KBM-7 (cell line): ENCODE measurements at regions of chr19 and their contacts with region 1.

Region 1: DNA sequence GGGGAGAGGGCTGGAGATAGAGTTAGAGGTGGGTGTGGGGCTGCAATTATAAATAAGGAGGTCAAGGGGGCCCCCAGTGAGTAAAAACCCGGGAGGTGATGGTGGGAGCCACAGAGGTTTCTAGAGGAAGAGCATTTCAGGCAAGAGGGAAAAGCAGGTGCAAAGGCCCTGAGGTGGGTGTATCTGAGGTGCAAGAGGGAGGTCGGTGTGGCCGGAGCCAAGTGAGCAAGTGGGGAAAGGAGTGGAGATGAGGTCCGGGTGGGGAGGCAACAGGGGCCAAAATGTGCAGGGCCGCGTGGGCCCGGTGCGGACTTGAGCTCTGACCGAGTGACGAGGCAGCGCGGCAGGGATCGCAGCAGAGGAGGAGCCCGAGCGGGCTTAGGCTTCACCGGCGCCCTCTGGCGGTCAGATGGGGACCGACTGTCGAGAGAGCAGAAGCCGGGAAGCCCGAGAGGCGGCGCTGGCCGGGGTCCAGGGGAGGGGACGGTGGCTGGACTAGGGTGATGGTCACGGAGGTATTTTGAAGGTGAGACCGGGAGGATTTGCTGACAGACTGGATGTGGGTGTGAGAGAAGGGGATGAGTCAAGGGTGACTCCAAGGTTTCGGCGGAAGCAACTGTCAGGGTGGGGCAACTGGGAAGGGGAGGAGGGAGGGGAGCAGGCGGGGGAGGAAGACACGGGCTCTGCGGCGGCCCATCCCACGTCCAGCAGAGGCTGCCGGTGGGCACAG is 17.7 kb upstream of the SPACA4 start:
- DNase-seq: peak; percentile 89

Region 2: DNA sequence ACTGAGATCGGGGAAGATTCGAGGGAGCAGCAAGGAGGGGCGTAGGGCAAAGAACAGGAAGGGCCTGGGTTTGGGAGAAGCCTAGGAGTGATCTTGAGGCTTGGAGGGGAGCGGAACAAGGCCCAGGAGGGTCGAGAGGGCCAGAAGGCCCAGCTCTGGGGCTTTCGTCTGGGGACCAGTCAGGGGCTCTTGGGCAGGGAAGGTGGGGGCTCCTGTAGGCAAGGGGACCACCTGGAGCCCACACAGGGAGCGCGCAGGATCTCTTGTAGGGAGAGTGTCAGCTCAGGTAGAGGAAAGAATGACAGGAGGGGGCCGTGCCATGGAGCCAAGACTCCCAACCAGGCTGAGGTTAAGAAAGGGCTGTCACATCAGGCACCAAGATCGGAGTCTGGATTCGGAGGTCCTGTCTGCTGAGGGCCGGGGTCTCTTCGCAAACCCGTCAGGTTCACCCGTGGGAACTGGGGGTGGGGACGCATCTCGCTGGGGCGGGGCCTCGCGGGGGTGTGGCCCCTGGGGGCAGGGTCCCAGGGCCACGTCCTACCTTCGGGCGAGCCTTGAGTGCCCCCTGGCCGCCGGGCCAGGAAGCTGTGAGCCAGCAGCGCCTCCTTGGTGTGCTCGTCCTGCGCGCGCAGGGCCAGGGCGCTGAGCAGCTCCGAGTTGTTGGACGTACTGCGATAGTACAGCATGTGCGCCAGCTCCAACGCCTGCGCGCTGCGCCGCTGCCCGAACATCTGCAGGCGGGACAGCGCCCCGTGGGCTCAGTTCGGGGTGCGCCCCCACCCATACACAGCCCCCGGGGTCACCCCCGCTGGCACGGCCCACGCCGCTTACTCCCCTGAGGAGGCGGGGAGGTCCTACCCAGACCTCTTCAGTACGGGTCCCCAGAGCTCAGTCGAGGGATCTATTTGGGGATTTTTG is 255.1 kb before region 1 on chr19:
- in situ Hi-C with region 1: loop called (anchors 25 kb)
- DNase-seq: peak; percentile 92

Region 3: DNA sequence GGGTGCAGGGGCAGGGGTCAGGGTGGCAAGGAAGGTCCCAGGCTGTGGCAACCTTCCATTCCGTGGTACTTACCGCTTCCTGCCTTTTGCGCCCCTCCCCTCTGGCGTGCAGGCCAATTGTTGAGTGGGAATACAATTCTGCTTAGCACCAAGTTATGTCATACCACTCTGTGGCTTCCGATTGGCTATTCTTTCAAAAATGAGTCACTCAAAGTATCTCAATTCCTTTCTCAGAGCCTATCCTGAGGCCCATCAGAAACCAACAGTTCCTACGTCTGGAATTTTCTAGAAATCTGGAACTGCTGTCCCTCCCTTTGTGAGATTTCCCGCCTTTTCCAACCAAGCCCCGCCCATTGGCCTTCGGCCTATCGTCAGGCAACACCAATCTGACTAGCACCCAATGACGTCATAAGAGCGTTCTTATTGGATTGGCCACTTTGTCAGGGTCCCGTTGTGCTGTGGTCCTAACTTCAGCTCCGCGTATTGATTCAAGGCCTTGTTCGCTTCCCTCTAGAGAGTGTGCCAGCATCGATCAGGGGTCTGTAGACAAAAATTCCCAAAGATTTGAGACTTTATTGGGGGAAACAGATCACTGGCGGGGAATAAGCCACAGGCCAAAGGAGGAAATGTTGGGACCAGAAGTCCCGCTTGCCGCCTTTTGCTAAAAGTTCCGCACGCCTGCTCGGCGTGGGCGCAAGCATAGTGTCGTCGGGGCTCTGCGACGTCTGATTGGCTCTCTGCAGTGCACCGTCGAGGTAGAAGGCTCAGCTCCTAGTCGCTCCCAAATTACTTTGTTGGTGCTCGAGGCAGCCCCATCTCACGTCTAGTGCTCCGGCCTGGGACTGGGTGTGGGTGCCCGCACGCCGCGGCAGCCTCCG is 72.3 kb after region 1 on chr19:
- in situ Hi-C with region 1: no loop called
- DNase-seq: peak; percentile 90